ENCODE measurements at regions of chr17 and their contacts with region 1.

Region 1: GRCh38 chr17:43393944-43394482 is 4.8 kb upstream of the ARL4D start:
- DNase-seq: no peak
- ATAC-seq: peak; percentile 72
- H3K4me3 ChIP-seq: no peak overlapping the region
- H3K27ac ChIP-seq: peak overlapping the region; percentile 2; the same call in 1 of the 2 replicates
- H3K4me1 ChIP-seq: peaks cover 4% of the 10 kb centered on the region
- H3K27me3 ChIP-seq: no peaks in the 10 kb centered on the region
- CTCF ChIP-seq: peak; percentile 81

Region 2: DNA sequence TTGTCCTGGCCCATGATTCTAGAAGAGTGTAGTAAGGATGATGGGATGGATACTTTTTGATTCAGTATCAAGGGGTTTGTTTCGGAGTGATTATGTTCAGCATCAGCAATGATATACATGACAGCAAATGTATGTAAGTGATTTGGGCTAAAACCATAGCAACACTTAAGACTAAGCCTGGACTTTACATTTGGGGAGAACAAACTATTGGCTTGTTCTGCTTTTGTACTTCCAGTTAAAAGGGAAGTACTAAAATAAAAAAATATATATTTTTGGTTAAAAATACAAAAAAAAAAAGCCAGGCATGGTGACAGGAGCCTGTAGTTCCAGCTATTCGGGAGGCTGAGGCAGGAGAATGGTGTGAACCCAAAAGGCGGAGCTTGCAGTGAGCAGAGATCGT is 69.2 kb after region 1 on chr17:
- CTCF ChIA-PET with region 1: interaction called, 3 read pairs
- POLR2A ChIA-PET with region 1: interaction called, 13 read pairs
- in situ Hi-C with region 1: no loop called
- intact Hi-C with region 1: no loop called
- DNase-seq: no peak
- ATAC-seq: no peak
- H3K4me3 ChIP-seq: no peak overlapping the region
- H3K27ac ChIP-seq: no peak overlapping the region
- H3K4me1 ChIP-seq: no peaks in the 10 kb centered on the region
- H3K27me3 ChIP-seq: no peaks in the 10 kb centered on the region
- CTCF ChIP-seq: no peak

Region 3: DNA sequence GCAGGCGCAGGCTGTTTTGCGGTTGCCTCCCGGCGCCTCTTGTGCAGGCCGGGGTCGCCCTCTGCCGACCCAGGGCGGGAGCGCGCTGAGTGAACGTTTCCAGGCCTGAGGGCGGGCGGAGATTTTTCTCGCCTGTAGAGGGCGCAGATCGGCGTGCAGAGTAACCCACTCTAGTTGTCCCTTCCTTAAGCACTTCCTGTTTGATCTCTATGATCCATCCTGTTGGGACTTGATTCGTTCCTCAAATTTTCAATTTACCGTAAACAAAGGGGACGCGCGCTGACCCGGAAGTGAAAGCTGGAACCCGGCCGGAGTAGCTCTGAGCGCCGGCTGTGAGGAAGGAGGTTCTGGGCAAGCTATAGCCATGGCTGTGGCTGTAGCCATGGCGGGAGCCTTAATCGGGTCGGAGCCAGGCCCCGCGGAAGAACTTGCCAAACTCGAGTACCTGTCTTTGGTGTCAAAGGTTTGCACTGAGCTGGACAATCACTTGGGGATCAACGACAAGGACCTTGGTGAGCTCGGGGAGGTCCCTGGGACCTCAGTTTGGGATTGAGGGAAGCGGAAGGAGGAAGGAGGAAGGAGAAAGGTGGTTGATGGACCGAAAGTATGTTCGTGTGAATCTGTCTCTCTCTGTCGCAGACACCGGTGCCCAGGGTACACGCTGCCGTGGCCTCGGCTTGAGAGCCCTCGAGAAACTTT is 89.8 kb after region 1 on chr17 and contains the start of gene DHX8:
- CTCF ChIA-PET with region 1: interaction called, 17 read pairs
- POLR2A ChIA-PET with region 1: interaction called, 18 read pairs
- in situ Hi-C with region 1: no loop called
- intact Hi-C with region 1: loop called (anchors 1 kb)
- DNase-seq: peak; percentile 91
- ATAC-seq: peak; percentile 99
- H3K4me3 ChIP-seq: peak within 1 kb of the TSS; percentile 92 to 98
- H3K27ac ChIP-seq: peak within 1 kb of the TSS; percentile 94
- H3K4me1 ChIP-seq: peaks cover 9% of the 10 kb centered on the region; the same call in 1 of the 2 replicates
- H3K27me3 ChIP-seq: no peaks in the 10 kb centered on the region
- CTCF ChIP-seq: peak; percentile 99
- total RNA-seq, gene DHX8: 45.6 TPM

Measured in Panc1 (cell line).